Naive thymus-derived CD4-positive, alpha-beta T cell (primary cell): ENCODE measurements at regions of chr3 and their contacts with region 1.

Region 1: GRCh38 chr3:184908859-184909258 is 96.9 kb downstream of the VPS8 start:
- DNase-seq: no peak
- ATAC-seq: no peak
- H3K4me3 ChIP-seq: no peak overlapping the region
- H3K4me3 Mint-ChIP-seq: no peak overlapping the region
- H3K27ac ChIP-seq: no peak overlapping the region
- H3K27ac Mint-ChIP-seq: peak overlapping the region in 1 of 9 donors; percentile 55
- H3K4me1 ChIP-seq: no peaks in the 10 kb centered on the region
- H3K4me1 Mint-ChIP-seq: peaks cover 0 to 7% (median 0%) of the 10 kb centered on the region in 7 donors
- H3K27me3 ChIP-seq: no peaks in the 10 kb centered on the region
- H3K27me3 Mint-ChIP-seq: no peaks in the 10 kb centered on the region

Region 2: DNA sequence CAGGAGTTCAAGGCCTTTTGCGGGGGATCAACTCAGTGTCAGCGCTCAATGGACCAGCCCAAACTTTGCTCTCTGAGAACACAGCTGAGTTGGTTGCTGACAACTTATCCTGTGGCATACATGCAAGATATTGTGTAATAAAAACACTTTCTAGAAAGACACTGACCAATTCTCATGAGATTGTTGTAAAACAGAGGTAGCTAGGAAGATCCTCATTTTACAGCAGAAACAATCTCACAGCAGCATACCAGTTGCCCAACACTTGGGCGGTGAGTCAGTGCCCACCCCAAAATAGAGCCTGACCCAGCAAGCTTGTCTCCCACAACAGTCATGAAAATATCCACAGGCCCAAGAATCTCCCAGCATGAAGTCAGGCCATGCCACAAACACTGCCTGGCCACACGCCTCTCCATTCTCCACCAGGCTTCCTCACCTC is 1371.5 kb before region 1 on chr3:
- CTCF ChIA-PET with region 1: no interaction called
- POLR2A ChIA-PET with region 1: no interaction called
- intact Hi-C with region 1: no loop called
- DNase-seq: no peak
- ATAC-seq: peak; percentile 78
- H3K4me3 ChIP-seq: no peak overlapping the region
- H3K4me3 Mint-ChIP-seq: peak overlapping the region in 4 of 10 donors; percentile 2 to 52 (median 28)
- H3K27ac ChIP-seq: no peak overlapping the region
- H3K27ac Mint-ChIP-seq: peak overlapping the region in 7 of 9 donors; percentile 26 to 91 (median 58)
- H3K4me1 ChIP-seq: peaks cover 11 to 33% of the 10 kb centered on the region in 2 donors
- H3K4me1 Mint-ChIP-seq: peaks cover 65 to 92% (median 86%) of the 10 kb centered on the region in 7 donors
- H3K27me3 ChIP-seq: no peaks in the 10 kb centered on the region
- H3K27me3 Mint-ChIP-seq: no peaks in the 10 kb centered on the region

Region 3: GRCh38 chr3:184859850-184860249 is 49.0 kb before region 1 on chr3:
- CTCF ChIA-PET with region 1: no interaction called
- POLR2A ChIA-PET with region 1: no interaction called
- intact Hi-C with region 1: loop called in 1 of 2 experiments (anchors 1 kb)
- DNase-seq: no peak
- ATAC-seq: no peak
- H3K4me3 ChIP-seq: no peak overlapping the region
- H3K4me3 Mint-ChIP-seq: no peak overlapping the region
- H3K27ac ChIP-seq: no peak overlapping the region
- H3K27ac Mint-ChIP-seq: no peak overlapping the region
- H3K4me1 ChIP-seq: no peaks in the 10 kb centered on the region
- H3K4me1 Mint-ChIP-seq: peaks cover 0 to 2% (median 0%) of the 10 kb centered on the region in 7 donors
- H3K27me3 ChIP-seq: no peaks in the 10 kb centered on the region
- H3K27me3 Mint-ChIP-seq: no peaks in the 10 kb centered on the region